Panc1 (cell line): ENCODE measurements at regions of chr13 and their contacts with region 1.

Region 1: DNA sequence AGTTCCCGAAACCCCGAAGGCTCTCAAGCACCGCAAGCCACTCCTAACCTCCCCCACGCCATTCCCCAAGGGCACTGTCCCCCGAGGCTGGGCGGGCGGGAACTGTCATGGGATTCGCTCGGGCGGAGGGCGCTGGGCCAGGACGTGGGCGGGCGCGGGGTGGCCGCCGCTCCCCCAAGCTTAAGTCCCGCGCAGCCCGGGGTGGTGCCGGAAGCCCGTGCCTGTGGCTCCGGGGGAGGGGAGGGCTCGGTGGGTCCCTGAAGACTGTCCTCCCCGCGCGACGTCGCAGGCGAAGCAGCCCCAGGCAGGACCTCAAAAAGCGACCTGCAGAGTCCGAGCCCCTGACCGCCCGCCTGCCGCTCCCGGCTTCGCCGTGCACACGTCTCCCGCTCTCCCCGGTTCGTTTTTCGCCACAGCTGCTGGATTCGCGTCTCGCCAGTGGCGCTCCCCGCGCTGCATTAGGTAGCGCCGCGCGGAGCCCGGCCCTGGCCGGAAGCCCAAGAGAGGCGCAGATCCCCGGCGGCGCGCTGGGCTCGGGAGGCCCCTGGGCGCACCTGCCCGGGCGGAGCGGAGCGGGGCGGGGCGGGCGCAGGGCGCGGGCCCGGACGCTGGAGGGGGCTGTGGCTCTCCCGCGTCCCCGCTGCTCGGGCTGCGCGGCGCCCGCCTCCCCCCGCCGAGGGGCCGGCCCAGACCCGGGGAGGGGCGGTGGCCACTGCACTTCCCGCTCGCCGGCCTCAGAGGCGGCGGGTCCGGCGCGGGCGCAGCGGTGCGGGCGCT is at the start of gene FARP1:
- DNase-seq: no peak
- ATAC-seq: peak; percentile 93
- H3K4me3 ChIP-seq: peak within 1 kb of the TSS; percentile 69 to 70
- H3K27ac ChIP-seq: peak within 1 kb of the TSS; percentile 84
- H3K4me1 ChIP-seq: peaks cover 23% of the 10 kb centered on the region
- H3K27me3 ChIP-seq: no peaks in the 10 kb centered on the region
- CTCF ChIP-seq: peak; percentile 71
- total RNA-seq, gene FARP1: 61.9 TPM

Region 2: GRCh38 chr13:98173431-98174152 is 31.0 kb after region 1 on chr13:
- CTCF ChIA-PET with region 1: no interaction called
- POLR2A ChIA-PET with region 1: no interaction called
- in situ Hi-C with region 1: no loop called
- intact Hi-C with region 1: no loop called
- DNase-seq: no peak
- ATAC-seq: peak; percentile 68
- H3K4me3 ChIP-seq: peak overlapping the region in 1 of 2 experiments; percentile 24; a peak in 2 of 4 replicates
- H3K27ac ChIP-seq: peak overlapping the region; percentile 85
- H3K4me1 ChIP-seq: peaks cover 42% of the 10 kb centered on the region
- H3K27me3 ChIP-seq: no peaks in the 10 kb centered on the region
- CTCF ChIP-seq: no peak

Region 3: DNA sequence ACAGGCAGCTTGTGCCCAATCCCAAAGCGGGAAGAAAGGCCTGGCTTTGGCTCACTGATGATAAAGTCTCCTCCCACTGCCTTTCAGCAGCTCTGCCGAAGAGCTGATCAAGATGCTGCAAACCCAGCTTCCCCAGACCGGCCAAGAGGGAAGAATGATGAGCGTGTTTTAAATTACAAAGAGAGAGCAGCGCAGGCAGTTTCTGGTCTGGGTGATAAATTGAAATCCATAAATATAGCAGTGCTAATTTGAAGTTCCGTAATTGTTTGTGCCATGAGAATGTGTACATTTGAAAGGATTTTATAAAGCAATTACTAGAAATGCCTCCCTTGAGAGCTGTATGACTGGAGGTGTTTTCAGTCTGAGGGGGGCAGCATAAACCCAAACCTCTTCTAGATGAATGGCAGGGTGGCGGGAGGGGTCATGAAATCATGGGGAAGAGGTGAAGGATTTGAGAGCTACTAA is 262.6 kb after region 1 on chr13:
- CTCF ChIA-PET with region 1: no interaction called
- POLR2A ChIA-PET with region 1: interaction called, 12 read pairs
- in situ Hi-C with region 1: loop called (anchors 25 kb)
- intact Hi-C with region 1: no loop called
- DNase-seq: no peak
- ATAC-seq: no peak
- H3K4me3 ChIP-seq: no peak overlapping the region
- H3K27ac ChIP-seq: no peak overlapping the region
- H3K4me1 ChIP-seq: no peaks in the 10 kb centered on the region
- H3K27me3 ChIP-seq: no peaks in the 10 kb centered on the region
- CTCF ChIP-seq: no peak

Region 4: DNA sequence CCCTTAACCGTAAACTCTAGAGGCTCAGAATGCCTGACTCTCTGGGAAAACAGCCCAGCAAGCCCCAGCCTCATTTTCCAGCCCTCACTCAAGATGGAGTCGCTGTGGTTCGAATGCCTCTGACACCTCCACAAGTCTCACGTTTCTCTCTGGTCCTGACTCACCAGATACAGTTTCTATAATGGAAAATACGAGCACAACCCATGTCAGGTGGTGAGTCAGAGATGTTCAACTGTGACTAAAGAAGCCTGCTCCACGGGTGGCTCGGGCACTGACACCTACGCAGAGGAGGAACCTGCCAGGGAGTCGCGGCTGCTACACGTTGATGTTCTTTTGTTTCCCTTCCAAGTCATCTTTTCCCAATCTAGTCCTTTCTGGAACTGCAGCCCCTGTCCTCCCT is 521.5 kb after region 1 on chr13:
- CTCF ChIA-PET with region 1: no interaction called
- POLR2A ChIA-PET with region 1: no interaction called
- in situ Hi-C with region 1: no loop called
- intact Hi-C with region 1: loop called (anchors 10 kb)
- DNase-seq: peak; percentile 5
- ATAC-seq: peak; percentile 65; the same call in 1 of the 2 replicates
- H3K4me3 ChIP-seq: no peak overlapping the region
- H3K27ac ChIP-seq: no peak overlapping the region
- H3K4me1 ChIP-seq: no peaks in the 10 kb centered on the region
- H3K27me3 ChIP-seq: no peaks in the 10 kb centered on the region
- CTCF ChIP-seq: no peak